Tibial artery (tissue), 4 donors: ENCODE measurements at regions of chr10 and their contacts with region 1.

Region 1: GRCh38 chr10:95841661-95842498 is 65.9 kb upstream of the CC2D2B start:
- DNase-seq: peak in 1 of 2 donors; percentile 48
- H3K4me3 ChIP-seq: no peak overlapping the region
- H3K27ac ChIP-seq: peak overlapping the region; percentile 36 to 39
- H3K4me1 ChIP-seq: peaks cover 0 to 49% (median 15%) of the 10 kb centered on the region in 4 donors
- H3K27me3 ChIP-seq: no peaks in the 10 kb centered on the region
- CTCF ChIP-seq: peak; percentile 65 to 84

Region 2: DNA sequence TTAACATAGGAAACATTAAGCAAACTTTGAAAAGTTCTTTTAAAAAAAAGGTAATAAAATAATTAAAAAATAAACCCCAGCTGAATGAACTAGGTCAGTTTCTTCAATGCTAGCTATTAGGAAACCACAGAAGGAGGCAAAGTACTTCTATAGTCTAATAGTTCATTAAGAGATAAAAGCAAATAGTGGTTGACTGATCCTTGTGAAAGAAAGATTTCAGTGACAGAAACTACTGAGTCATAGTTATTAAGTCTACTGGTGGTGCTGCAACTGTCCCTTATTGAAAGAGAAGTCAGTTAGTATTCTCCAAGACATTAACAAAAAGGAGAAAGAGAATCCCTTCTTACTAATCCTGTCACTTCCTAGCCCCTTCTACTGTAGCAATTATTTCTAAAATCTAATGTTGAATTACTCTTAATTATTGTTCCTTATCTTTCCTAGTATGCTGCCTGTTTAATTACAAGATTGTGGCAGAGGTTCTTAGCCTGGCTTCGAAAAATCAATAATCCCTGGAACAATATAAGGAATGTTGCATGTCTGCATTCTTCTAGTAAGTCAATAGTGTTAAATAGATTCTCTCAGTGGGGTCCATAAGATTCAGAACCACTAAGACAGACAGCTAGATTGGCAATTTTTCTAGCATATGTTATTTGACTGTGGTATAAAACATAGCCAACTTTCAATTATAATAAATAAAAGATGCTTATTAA is 166.3 kb before region 1 on chr10:
- intact Hi-C with region 1: no loop called
- DNase-seq: no peak
- H3K4me3 ChIP-seq: no peak overlapping the region
- H3K27ac ChIP-seq: no peak overlapping the region
- H3K4me1 ChIP-seq: no peaks in the 10 kb centered on the region
- H3K27me3 ChIP-seq: no peaks in the 10 kb centered on the region
- CTCF ChIP-seq: no peak

Region 3: GRCh38 chr10:95693668-95694534 is 148.0 kb before region 1 on chr10 and contains the start of gene TCTN3:
- intact Hi-C with region 1: loop called (anchors 1 kb)
- DNase-seq: peak; percentile 96 to 98
- H3K4me3 ChIP-seq: peak within 1 kb of the TSS; percentile 72 to 91
- H3K27ac ChIP-seq: peak within 1 kb of the TSS; percentile 79 to 82
- H3K4me1 ChIP-seq: peaks cover 0 to 34% (median 23%) of the 10 kb centered on the region in 4 donors
- H3K27me3 ChIP-seq: no peaks in the 10 kb centered on the region
- CTCF ChIP-seq: peak; percentile 99 to 100

Region 4: DNA sequence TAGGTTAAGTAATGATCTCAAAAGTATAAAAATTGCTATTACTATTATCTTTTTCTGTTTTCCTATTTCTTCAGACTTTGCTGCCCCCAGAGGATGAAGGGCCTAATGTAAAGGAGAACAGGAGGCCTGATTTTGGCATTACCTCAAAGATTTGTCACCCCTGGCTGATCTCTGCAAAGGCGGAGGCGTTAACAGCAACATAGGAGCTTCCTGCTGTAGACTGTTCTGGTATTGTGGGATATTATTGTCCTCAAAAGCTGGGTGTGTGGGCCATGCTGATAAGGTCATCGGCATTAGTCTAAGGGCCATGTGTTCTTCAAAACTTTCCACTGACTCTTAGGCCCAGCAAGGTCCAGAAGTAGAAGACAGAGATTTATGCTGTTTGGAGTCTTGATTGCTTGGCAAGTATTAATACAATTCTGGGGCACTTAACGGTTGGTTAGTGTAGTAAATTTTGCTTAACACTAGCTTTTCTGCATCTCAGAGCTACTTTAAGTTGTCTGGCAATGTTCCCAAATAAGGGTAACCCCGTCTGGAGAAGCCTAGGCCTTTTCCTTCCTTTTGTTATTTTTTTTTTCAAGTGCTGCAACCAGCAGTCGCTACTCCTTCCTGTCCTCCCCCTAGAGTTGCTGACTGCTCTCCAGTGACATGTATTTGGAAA is 99.9 kb before region 1 on chr10:
- intact Hi-C with region 1: loop called (anchors 5 kb)
- DNase-seq: peak in 1 of 2 donors; percentile 43
- H3K4me3 ChIP-seq: no peak overlapping the region
- H3K27ac ChIP-seq: peak overlapping the region; percentile 57 to 65
- H3K4me1 ChIP-seq: peaks cover 0 to 25% (median 5%) of the 10 kb centered on the region in 4 donors
- H3K27me3 ChIP-seq: no peaks in the 10 kb centered on the region
- CTCF ChIP-seq: peak in 1 of 2 experiments; percentile 6